ENCODE measurements at regions of chr17 and their contacts with region 1.

Region 1: DNA sequence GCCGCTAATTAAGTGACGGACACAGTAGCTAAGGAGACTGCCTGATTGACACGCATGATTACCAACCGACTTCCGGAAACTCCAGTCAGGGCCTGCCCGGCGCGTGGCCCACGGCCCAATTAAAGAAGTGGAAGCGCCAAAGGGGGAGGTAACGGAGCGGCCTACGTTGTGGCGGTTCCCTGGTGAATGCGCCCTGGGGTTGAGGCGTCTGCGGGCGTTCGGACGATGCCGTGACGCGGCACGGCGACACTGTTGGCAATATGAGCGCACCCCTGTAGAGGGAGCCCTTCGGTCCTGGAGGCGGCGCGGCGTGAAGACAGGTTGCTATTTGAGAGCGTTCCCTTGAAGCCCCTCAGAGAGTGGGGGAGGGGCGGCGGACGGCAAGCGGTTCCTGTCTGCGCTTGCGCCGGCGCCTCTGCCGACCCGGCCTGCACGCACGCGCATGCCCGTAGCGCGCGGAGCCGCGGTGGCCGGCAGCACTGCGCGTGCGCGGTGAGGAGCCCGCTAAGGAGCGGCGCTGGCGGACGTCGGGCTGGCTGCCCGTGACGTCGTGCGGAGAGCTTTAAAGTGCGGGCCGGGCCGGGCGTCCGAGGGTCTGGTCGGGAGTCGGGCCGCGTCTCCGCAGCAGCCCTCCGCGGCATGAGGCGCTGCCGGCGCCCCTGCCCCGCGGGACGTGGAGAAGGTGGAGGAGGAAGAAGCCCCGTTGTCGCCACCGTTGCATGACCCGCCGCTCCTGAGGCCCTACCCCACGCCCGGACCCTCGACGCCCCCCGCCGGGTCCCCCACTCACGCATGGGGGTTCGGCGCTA is at the start of gene ALKBH5:
- DNase-seq: peak; percentile 100
- ATAC-seq: peak; percentile 86 to 93
- H3K4me3 ChIP-seq: peak within 1 kb of the TSS; percentile 73
- H3K27ac ChIP-seq: peak within 1 kb of the TSS; percentile 93 to 96
- H3K4me1 ChIP-seq: peaks cover 43% of the 10 kb centered on the region
- CTCF ChIP-seq: 0 out of 3 replicates have a peak, but pooled peaks have one; percentile 11
- EP300 ChIP-seq: no peak
- POLR2A ChIP-seq: peak; percentile 72
- RAD21 ChIP-seq: no peak
- polyA plus RNA-seq, gene ALKBH5: 99.2 and 105 TPM in 2 replicates

Region 2: DNA sequence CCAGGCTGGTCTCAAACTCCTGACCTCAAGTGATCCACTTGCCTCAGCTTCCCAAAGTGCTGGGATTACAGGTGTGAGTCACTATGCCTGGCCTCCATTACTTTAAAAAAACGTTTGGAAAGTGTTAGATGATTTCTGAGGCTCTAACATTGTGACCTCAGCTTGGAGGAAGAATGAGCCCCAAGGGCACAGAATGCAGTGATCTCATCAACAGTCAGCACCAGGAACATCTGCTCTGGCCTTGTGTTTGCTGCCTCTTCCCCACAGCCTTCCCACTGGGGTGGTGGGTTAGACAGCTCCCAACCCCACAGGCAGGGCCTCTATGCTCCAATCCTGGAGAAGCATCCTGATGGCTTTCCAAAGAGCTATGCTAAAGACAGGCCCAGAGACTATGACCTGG is 309.1 kb before region 1 on chr17:
- CTCF ChIA-PET with region 1: no interaction called
- POLR2A ChIA-PET with region 1: no interaction called
- DNase-seq: peak in 1 of 2 experiments; percentile 22
- ATAC-seq: no peak
- H3K4me3 ChIP-seq: no peak overlapping the region
- H3K27ac ChIP-seq: no peak overlapping the region
- H3K4me1 ChIP-seq: peaks cover 5% of the 10 kb centered on the region; the same call in 1 of the 3 replicates
- CTCF ChIP-seq: no peak
- EP300 ChIP-seq: no peak
- POLR2A ChIP-seq: no peak
- RAD21 ChIP-seq: no peak

Region 3: DNA sequence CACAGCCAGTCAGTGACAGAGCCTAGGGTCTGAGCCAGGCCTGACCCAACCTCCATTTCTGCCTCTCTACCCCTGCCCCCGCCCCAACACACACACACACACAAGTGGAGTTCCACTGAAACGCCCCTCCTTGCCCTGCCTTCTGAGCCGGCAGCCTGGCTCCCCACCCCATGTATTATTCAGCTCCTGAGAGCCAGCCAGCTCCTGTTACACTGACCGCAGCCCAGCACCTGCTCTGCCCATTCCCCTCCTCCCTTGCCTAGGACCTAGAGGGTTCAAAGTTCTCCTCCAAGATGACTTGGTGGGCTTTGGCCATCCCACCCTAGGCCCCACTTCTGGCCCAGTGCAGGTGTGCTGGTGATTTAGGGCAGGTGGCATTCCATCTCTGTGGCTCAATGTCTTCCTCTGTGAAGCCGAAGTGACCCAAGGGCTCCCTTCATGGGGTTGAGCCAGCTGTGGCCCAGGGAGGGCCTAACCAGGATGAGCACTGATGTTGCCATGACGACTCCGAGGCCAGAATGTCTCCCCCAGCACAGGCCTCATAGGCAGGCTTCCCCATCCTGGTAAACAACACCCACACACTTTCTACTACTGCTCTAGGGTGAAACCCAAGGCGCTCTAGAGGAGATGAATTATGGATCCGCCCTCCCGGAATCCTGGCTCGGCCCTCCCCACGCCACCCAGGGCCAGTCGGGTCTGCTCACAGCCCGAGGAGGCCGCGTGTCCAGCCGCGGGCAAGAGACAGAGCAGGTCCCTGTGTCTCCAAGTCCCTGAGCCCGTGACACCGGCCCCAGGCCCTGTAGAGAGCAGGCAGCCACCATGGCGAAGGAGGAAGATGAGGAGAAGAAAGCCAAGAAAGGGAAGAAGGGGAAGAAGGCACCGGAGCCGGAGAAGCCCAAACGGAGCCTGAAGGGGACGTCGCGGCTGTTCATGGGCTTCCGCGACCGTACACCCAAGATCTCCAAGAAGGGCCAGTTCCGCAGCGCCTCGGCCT is 65.3 kb before region 1 on chr17:
- CTCF ChIA-PET with region 1: no interaction called
- POLR2A ChIA-PET with region 1: no interaction called
- DNase-seq: no peak
- ATAC-seq: 0 out of 6 replicates have a peak, but pooled peaks of 1 of the 2 experiments have one; percentile 6
- H3K4me3 ChIP-seq: no peak overlapping the region
- H3K27ac ChIP-seq: no peak overlapping the region
- H3K4me1 ChIP-seq: no peaks in the 10 kb centered on the region
- CTCF ChIP-seq: no peak
- EP300 ChIP-seq: no peak
- POLR2A ChIP-seq: no peak
- RAD21 ChIP-seq: no peak

Region 4: GRCh38 chr17:18166894-18167293 is 16.6 kb before region 1 on chr17:
- CTCF ChIA-PET with region 1: interaction called, 8 read pairs
- POLR2A ChIA-PET with region 1: interaction called, 10 read pairs
- DNase-seq: peak in 1 of 2 experiments; percentile 60
- ATAC-seq: peak; percentile 19 to 67; a peak in 3 of 6 replicates
- H3K4me3 ChIP-seq: no peak overlapping the region
- H3K27ac ChIP-seq: no peak overlapping the region
- H3K4me1 ChIP-seq: no peaks in the 10 kb centered on the region
- CTCF ChIP-seq: no peak; the same call in 2 of the 3 replicates
- EP300 ChIP-seq: no peak
- POLR2A ChIP-seq: no peak
- RAD21 ChIP-seq: peak in 1 of 2 experiments; percentile 36; a peak in 2 of 5 replicates

Region 5: DNA sequence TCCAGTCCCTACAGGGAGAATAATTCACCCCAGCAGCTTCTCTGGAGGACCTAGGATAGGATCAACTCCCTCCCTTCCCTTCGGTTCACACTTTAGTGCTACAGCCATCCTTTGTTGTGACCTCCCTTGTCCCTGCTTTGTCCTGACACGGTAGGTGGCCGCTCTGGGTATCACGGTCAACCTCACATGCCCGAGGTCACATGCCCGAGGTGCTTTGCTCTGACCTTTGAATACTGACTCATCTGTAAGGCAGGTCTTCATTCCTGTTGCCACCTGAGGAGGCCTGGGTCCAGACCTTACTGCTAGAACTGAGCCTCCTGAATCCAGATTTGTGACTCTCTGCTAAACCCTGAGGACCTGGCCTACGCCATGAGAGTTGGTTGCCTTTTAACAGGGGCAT is 19.8 kb after region 1 on chr17:
- CTCF ChIA-PET with region 1: interaction called, 32 read pairs
- POLR2A ChIA-PET with region 1: interaction called, 8 read pairs
- DNase-seq: no peak
- ATAC-seq: peak in 1 of 2 experiments; percentile 50; a peak in 2 of 6 replicates
- H3K4me3 ChIP-seq: no peak overlapping the region
- H3K27ac ChIP-seq: 0 out of 6 replicates have a peak overlapping the region, but pooled peaks of 1 of the 2 experiments have one; percentile 6
- H3K4me1 ChIP-seq: peaks cover 14% of the 10 kb centered on the region
- CTCF ChIP-seq: no peak
- EP300 ChIP-seq: no peak
- POLR2A ChIP-seq: no peak
- RAD21 ChIP-seq: no peak